SK-N-SH (cell line): ENCODE measurements at regions of chr2 and their contacts with region 1.

Region 1: GRCh38 chr2:12982149-12982584 is 265.4 kb downstream of the TRIB2 start:
- DNase-seq: peak; percentile 47
- H3K4me3 ChIP-seq: no peak overlapping the region
- H3K27ac ChIP-seq: peak overlapping the region; percentile 12 to 93; a peak in 3 of 4 replicates
- H3K4me1 ChIP-seq: peaks cover 17 to 44% of the 10 kb centered on the region in 2 experiments; a peak in 3 of 4 replicates
- H3K27me3 ChIP-seq: no peaks in the 10 kb centered on the region
- CTCF ChIP-seq: no peak
- EP300 ChIP-seq: peak; percentile 67 to 75; a peak in 3 of 4 replicates
- RAD21 ChIP-seq: no peak

Region 2: GRCh38 chr2:12493031-12493513 is 489.1 kb before region 1 on chr2:
- CTCF ChIA-PET with region 1: no interaction called
- POLR2A ChIA-PET with region 1: no interaction called
- DNase-seq: no peak
- H3K4me3 ChIP-seq: no peak overlapping the region
- H3K27ac ChIP-seq: no peak overlapping the region
- H3K4me1 ChIP-seq: peaks cover 0 to 12% of the 10 kb centered on the region in 2 experiments; a peak in 2 of 4 replicates
- H3K27me3 ChIP-seq: no peaks in the 10 kb centered on the region
- CTCF ChIP-seq: no peak
- EP300 ChIP-seq: no peak
- RAD21 ChIP-seq: no peak

Region 3: DNA sequence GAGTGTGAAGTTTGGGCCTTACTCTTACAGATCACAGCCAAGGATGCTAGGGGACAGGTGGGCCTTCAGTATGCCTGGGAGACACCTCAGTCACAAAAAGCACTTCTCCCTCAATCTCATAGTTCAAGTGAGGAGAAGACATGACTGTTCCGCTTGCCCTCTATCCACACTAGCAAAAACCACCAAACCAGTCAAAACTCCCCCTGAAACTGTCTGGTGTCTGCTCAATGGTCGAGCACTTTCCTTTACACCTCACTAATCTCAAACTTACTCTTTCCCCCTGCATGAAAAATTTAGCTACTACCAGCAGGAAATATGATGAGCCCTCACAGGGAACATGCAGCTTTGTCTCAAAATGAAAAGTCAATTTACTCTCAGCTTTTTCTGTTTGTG is 33.2 kb before region 1 on chr2:
- CTCF ChIA-PET with region 1: interaction called, 9 read pairs
- POLR2A ChIA-PET with region 1: interaction called, 12 read pairs
- DNase-seq: no peak
- H3K4me3 ChIP-seq: no peak overlapping the region; a peak in 1 of 4 replicates
- H3K27ac ChIP-seq: peak overlapping the region; percentile 59 to 100
- H3K4me1 ChIP-seq: peaks cover 32 to 37% of the 10 kb centered on the region in 2 experiments
- H3K27me3 ChIP-seq: no peaks in the 10 kb centered on the region
- CTCF ChIP-seq: no peak
- EP300 ChIP-seq: no peak
- RAD21 ChIP-seq: no peak

Region 4: DNA sequence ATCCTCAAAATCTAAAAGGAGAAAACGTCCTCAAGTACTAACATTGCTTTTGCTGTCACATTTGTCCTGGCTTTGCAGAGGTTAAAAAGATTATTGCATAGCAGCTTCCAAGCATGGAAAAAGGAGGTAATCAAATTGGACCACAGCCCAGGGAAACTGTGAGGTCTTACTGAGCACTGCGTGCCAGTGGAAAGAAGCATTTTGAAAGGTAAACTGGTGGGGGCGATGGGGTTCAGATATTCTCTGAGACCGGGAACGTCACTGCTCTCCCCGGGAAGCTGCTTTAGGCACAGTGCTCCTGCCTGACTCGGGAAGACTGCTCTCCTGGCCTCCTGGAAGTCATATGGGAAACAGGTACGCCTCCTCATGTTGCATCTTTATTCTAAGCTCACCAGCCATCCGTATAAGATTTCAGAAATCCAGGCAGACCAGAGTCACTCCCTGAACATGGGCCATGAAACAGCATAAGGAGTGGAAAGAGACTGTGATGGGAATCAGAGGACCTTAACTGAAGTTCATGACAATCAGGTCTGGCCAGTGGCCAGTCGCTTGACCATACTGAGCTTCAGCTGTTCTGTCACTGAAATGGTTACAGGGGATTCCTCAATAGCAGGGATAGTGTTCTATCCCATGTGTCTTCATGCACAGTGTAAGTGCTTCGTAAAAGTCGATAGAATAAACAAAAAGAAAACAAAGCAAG is 18.6 kb after region 1 on chr2:
- CTCF ChIA-PET with region 1: interaction called, 32 read pairs
- POLR2A ChIA-PET with region 1: no interaction called
- DNase-seq: no peak
- H3K4me3 ChIP-seq: no peak overlapping the region
- H3K27ac ChIP-seq: no peak overlapping the region
- H3K4me1 ChIP-seq: peaks cover 16 to 31% of the 10 kb centered on the region in 2 experiments
- H3K27me3 ChIP-seq: no peaks in the 10 kb centered on the region
- CTCF ChIP-seq: no peak
- EP300 ChIP-seq: no peak
- RAD21 ChIP-seq: no peak

Region 5: GRCh38 chr2:13046557-13047165 is 64.5 kb after region 1 on chr2:
- CTCF ChIA-PET with region 1: no interaction called
- POLR2A ChIA-PET with region 1: no interaction called
- DNase-seq: no peak
- H3K4me3 ChIP-seq: no peak overlapping the region; a peak in 1 of 4 replicates
- H3K27ac ChIP-seq: no peak overlapping the region
- H3K4me1 ChIP-seq: no peaks in the 10 kb centered on the region
- H3K27me3 ChIP-seq: no peaks in the 10 kb centered on the region
- CTCF ChIP-seq: peak; percentile 62
- EP300 ChIP-seq: no peak
- RAD21 ChIP-seq: peak; percentile 75

Region 6: GRCh38 chr2:13067508-13067907 is 85.3 kb after region 1 on chr2:
- CTCF ChIA-PET with region 1: no interaction called
- POLR2A ChIA-PET with region 1: no interaction called
- DNase-seq: no peak
- H3K4me3 ChIP-seq: no peak overlapping the region
- H3K27ac ChIP-seq: no peak overlapping the region
- H3K4me1 ChIP-seq: no peaks in the 10 kb centered on the region; a peak in 1 of 4 replicates
- H3K27me3 ChIP-seq: no peaks in the 10 kb centered on the region
- CTCF ChIP-seq: no peak
- EP300 ChIP-seq: no peak
- RAD21 ChIP-seq: no peak